ENCODE measurements at regions of chr6 and their contacts with region 1.

Region 1: DNA sequence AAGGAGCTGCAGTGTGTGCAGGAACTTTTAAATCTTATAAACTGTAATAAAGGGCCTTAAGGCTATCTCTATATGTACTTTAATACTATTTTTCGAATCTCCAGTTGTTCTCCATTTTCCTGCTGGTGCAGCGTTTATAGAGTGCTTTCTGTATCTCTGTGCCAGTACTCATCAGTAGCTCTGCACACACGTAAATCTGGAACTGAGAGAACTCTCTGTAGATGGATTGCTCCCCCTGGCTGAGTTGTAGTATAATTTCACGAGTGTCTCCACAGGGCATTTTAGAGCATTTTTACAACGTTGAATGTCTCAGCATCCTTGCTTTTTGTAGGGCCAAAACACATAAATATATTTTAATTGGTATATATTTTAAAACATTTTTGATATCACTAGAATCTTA is 256.5 kb downstream of the TRDN start:
- H3K4me3 ChIP-seq: no peak overlapping the region
- H3K27ac ChIP-seq: no peak overlapping the region
- H3K4me1 ChIP-seq: no peaks in the 10 kb centered on the region
- CTCF ChIP-seq: peak; percentile 50; the same call in 1 of the 2 replicates

Region 2: GRCh38 chr6:122947355-122947754 is 432.9 kb before region 1 on chr6:
- CTCF ChIA-PET with region 1: interaction called, 15 read pairs
- POLR2A ChIA-PET with region 1: no interaction called
- H3K4me3 ChIP-seq: no peak overlapping the region
- H3K27ac ChIP-seq: no peak overlapping the region
- H3K4me1 ChIP-seq: no peaks in the 10 kb centered on the region
- CTCF ChIP-seq: no peak

Region 3: GRCh38 chr6:123288649-123289048 is 91.6 kb before region 1 on chr6:
- CTCF ChIA-PET with region 1: no interaction called
- POLR2A ChIA-PET with region 1: no interaction called
- H3K4me3 ChIP-seq: no peak overlapping the region
- H3K27ac ChIP-seq: no peak overlapping the region
- H3K4me1 ChIP-seq: no peaks in the 10 kb centered on the region
- CTCF ChIP-seq: no peak

Region 4: DNA sequence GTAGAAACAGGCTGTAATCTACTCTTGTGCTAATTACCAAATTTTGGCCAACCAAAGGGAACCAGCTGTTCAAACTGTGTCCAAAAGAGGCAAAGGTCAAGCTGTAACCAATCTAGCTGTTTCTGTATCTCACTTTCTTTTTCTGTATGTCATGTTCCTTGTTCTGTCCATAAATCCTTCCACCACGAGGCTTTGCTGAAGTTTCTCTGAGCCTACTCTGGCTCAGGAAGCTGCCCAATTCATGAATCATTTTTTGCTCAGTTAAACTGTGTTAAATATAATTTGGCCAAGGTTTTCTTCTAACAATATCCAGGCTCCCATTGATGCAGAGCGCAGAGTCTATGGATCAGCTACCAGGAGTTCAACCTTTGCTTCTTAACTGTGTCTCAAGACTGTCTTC is 16.3 kb before region 1 on chr6:
- CTCF ChIA-PET with region 1: interaction called, 20 read pairs
- POLR2A ChIA-PET with region 1: interaction called, 3 read pairs
- H3K4me3 ChIP-seq: no peak overlapping the region
- H3K27ac ChIP-seq: no peak overlapping the region
- H3K4me1 ChIP-seq: no peaks in the 10 kb centered on the region
- CTCF ChIP-seq: no peak

Region 5: DNA sequence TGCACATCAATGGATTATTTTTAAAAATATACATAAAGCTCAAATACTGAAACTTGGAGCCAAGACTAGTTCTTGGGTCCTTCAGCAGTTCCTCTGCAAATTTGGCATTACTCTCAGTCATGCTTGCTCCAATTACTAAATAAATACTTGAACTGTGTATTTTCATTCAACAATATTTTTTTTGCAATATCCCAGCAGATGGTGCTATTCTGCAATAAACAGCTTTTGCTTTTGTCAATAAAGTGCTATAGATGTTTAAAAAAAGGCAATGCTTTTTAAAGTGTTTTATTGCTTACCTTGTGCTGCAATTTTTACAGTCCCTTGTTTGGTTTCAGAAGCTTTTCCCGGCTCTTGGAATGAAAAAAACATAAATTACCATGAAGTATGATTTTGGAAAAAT is 13.1 kb after region 1 on chr6:
- CTCF ChIA-PET with region 1: interaction called, 11 read pairs
- POLR2A ChIA-PET with region 1: no interaction called
- H3K4me3 ChIP-seq: no peak overlapping the region
- H3K27ac ChIP-seq: no peak overlapping the region
- H3K4me1 ChIP-seq: no peaks in the 10 kb centered on the region
- CTCF ChIP-seq: peak; percentile 53; the same call in 1 of the 2 replicates

Measured in HEK293 (cell line).